H1 (cell line): ENCODE measurements at regions of chr17 and their contacts with region 1.

Region 1: DNA sequence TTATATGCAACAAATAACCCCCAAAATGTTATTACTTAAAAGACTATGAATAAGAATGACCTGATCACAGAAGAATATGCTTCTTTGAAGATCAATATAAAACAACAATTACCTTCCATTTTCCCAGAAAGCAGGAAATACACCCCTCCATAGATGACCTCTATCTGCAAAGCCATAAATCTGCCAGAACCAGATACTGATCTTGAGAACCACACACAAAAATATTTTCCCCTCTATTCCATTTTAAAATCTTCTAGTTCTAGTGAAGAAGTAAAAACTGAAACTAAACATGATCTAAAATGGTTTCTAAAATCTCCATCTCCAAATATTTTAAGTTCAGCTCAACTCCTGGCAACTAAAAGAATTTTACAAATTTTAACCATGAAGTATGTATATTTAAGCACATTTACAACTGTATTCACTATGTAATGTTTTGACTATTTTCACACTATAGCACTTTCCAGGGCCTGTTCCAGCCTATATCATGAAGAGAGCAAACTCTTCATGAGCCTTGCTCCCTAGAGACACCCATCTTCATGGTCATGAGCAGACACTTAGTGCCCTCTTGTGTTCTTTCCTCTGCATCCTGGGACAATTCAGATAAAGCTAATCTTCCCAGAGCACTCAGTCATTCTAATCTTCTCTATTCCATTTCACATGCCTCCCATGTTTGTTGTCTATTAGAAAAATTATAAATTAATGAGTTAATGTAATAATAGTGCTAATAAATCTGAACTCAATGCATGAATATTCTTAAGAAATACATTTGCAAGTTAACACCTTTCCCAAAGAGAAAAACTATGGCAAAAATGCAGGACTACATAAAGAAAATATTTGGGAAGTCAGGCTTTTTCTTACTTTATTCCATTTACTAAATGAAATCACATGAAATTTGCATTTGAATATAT is 87.0 kb downstream of the HELZ start:
- DNase-seq: no peak
- H3K4me3 ChIP-seq: no peak overlapping the region
- H3K27ac ChIP-seq: no peak overlapping the region
- H3K4me1 ChIP-seq: peaks cover 0 to 3% (median 1%) of the 10 kb centered on the region in 4 experiments; a peak in 3 of 7 replicates
- H3K27me3 ChIP-seq: no peaks in the 10 kb centered on the region
- CTCF ChIP-seq: peak in 2 of 3 experiments; percentile 50 to 52; a peak in 3 of 4 replicates
- EP300 ChIP-seq: no peak
- POLR2A ChIP-seq: no peak
- RAD21 ChIP-seq: peak; percentile 72 to 74

Region 2: DNA sequence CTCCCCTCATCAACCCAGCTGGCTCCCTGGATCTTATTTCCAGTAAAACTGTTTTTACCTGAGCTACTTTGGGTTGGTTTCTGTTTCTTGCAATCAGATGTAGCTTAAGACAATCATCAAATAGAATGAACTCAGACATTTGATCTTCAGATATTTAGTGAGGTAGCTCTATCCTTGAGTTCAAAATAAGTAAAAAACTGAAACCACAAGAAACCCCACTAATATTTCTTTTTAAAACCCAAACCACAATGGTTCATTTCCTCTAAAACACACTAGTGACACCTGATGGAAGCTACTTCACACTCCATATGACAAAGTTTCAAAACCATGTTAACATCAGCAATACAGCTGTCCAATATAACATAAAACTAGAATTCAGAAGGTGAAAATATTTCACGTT is 75.9 kb before region 1 on chr17:
- CTCF ChIA-PET with region 1: no interaction called
- POLR2A ChIA-PET with region 1: no interaction called
- DNase-seq: no peak
- H3K4me3 ChIP-seq: no peak overlapping the region
- H3K27ac ChIP-seq: no peak overlapping the region
- H3K4me1 ChIP-seq: no peaks in the 10 kb centered on the region
- H3K27me3 ChIP-seq: no peaks in the 10 kb centered on the region
- CTCF ChIP-seq: no peak
- EP300 ChIP-seq: no peak
- POLR2A ChIP-seq: no peak
- RAD21 ChIP-seq: no peak

Region 3: GRCh38 chr17:67095803-67096202 is 62.2 kb before region 1 on chr17:
- CTCF ChIA-PET with region 1: no interaction called
- POLR2A ChIA-PET with region 1: no interaction called
- DNase-seq: no peak
- H3K4me3 ChIP-seq: no peak overlapping the region
- H3K27ac ChIP-seq: no peak overlapping the region
- H3K4me1 ChIP-seq: no peaks in the 10 kb centered on the region
- H3K27me3 ChIP-seq: no peaks in the 10 kb centered on the region
- CTCF ChIP-seq: no peak
- EP300 ChIP-seq: no peak
- POLR2A ChIP-seq: no peak
- RAD21 ChIP-seq: no peak

Region 4: DNA sequence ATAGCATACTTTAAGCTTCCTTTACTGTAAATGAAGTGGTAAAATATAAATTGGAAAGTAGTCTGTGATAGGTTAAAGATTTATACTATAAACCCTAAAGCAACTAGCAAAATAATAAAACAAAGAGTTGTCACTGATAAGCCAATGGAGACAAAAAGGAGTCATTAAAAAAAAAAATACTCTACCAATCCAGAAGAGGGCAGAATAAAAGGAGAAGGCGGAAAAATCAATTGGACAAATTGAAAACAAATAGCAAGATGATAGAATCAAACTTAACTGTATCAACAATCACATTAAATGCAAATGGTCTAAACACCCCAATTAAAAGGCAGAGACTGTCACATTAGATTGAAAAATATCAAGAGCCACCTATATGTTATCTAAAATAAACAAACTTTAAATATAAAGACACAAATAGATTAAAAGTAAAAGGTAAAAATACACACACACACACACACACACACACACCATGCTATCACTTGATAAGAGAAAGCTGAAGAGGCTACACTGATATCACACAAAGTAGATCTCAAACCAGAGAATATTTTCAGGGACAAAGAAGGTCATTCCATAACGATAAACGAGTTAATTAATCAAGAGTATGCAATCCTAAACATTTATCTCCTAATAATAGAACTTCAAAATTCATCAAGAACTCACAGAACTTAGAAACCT is 41.8 kb before region 1 on chr17:
- CTCF ChIA-PET with region 1: no interaction called
- POLR2A ChIA-PET with region 1: no interaction called
- DNase-seq: no peak
- H3K4me3 ChIP-seq: no peak overlapping the region
- H3K27ac ChIP-seq: no peak overlapping the region
- H3K4me1 ChIP-seq: no peaks in the 10 kb centered on the region
- H3K27me3 ChIP-seq: no peaks in the 10 kb centered on the region
- CTCF ChIP-seq: peak in 1 of 3 experiments; percentile 5; a peak in 1 of 4 replicates
- EP300 ChIP-seq: no peak
- POLR2A ChIP-seq: no peak
- RAD21 ChIP-seq: no peak

Region 5: DNA sequence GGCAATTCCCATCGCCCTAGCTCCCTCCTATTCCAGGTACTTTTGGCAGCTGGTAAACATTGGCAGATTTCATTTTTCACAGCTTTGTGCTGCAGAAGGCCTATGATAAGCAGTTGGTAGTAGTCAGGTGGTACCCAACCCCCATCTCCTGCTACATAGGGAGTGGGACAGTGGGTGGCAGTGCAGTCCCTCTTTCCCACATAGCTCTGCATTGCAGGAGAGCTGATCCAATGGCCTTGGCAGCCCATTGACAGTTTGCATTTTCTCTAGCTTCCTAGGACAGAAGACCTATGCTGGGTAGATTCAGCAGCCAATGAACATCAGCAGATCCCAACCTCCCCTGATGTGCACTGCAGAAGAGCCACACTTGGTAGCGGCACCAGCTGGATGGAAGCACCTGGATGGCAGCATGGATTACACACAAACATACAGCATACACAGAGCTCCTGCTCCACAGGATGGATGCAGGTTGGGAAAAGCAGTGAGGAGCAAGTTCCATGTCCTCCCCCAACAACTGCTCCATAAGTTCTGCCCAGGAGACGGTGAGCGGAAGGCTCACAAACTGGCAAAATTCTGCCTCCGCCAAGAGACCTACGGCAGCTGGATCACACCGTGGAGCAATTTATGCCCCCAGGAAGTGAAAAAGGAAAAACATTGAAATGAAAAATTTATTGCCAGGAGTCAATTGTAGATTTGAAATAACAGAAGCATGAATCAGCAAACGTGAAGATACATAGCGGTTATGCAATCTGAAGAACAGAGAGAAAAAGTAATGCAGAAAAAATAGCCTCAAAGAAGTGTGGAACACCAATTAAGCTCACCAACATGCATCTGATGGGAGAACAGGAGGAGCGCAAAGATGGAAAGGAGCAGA is 18.0 kb before region 1 on chr17:
- CTCF ChIA-PET with region 1: interaction called, 11 read pairs
- POLR2A ChIA-PET with region 1: no interaction called
- DNase-seq: no peak
- H3K4me3 ChIP-seq: no peak overlapping the region
- H3K27ac ChIP-seq: no peak overlapping the region
- H3K4me1 ChIP-seq: peaks cover 0 to 3% (median under 1%) of the 10 kb centered on the region in 4 experiments; a peak in 4 of 7 replicates
- H3K27me3 ChIP-seq: no peaks in the 10 kb centered on the region
- CTCF ChIP-seq: peak; percentile 36 to 58 (median 51); a peak in 3 of 4 replicates
- EP300 ChIP-seq: no peak
- POLR2A ChIP-seq: no peak
- RAD21 ChIP-seq: peak; percentile 61 to 72